Left cardiac atrium (tissue), 4 donors: ENCODE measurements at regions of chr3 and their contacts with region 1.

Region 1: GRCh38 chr3:123328851-123329635 is 119.8 kb downstream of the ADCY5 start:
- DNase-seq: peak; percentile 76
- ATAC-seq: peak; percentile 48 to 59

Region 2: DNA sequence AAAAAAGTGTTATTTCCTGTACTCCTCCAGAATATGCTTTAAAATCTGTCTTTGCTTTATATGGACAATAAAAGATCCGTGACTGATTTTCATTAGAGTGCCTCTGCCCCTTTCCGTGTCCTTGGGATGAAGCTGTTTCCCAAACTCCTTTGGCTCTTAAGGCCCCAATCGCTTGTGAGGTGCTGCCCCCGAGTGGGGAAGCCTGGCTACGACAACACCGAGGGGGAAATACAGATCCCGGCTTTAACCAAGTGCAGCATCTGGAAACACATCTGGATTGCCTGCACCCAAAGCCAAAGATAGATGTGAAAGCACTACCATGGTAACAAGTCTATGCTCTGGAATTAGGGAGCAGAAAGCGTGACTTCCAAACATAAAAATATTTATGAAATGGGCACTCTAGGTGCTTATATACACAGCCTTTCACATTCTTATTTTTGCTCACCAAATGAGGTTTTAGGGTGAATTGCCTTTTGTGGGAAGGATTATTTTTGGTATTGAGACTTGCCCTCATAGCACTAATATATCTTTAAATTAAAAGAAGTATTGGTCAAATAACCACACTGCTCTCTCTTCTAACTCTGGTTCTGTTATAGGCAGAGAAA is 160.5 kb after region 1 on chr3:
- intact Hi-C with region 1: loop called (anchors 2 to 5 kb)
- DNase-seq: peak; percentile 63
- ATAC-seq: peak; percentile 76

Region 3: GRCh38 chr3:123559040-123559861 is 230.2 kb after region 1 on chr3:
- intact Hi-C with region 1: loop called (anchors 2 to 10 kb)
- DNase-seq: no peak
- ATAC-seq: no peak